Right lobe of liver (tissue), 6 donors: ENCODE measurements at regions of chr14 and their contacts with region 1.

Region 1: DNA sequence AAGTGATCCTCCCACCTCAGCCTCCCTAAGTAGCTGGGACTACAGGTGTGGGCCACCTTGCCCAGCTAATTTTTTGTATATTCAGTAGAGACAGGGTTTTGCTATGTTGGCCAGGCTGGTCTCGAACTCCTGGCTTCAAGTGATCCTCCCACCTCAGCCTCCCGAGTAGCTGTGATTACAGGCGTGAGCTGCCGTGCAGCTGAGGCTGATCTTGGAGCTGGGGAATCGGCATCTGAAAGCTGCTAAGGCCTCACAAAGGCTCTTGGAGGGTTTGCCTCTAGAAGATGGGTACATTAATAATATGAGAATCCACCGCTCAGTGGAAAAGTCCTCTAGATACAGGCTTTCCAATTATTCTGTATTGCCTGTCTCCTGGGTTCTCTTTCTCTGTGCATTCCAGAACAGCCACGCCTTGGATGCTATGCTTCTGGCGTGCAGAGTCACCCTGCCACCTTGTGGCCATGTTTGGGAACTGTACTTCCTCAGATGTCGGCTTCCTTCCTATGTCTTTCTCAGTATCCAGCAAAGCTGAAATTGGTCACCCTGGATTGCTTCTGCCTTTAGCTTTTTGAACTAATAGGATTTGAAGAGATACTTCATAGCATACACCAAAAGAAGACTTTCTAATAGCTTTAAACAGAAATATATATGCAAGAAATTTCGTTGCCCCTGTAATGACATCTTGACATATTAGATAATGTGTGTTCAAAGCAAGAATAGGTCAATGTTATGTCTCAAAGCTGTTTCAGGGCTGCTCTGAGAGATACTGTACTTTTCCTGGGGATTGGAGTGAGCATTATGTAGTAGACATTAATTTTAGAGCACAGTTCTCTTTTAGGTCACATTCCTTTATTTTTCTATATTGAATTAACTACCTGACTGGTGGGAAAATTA is 75.4 kb downstream of the SNAPC1 start:
- DNase-seq: peak; percentile 68 to 76 (median 70)
- ATAC-seq: peak; percentile 100
- H3K4me3 ChIP-seq: no peak overlapping the region
- H3K27ac ChIP-seq: no peak overlapping the region
- H3K4me1 ChIP-seq: no peaks in the 10 kb centered on the region
- H3K27me3 ChIP-seq: no peaks in the 10 kb centered on the region
- CTCF ChIP-seq: peak; percentile 92 to 97 (median 96)
- POLR2A ChIP-seq: no peak

Region 2: GRCh38 chr14:61456720-61457119 is 380.9 kb before region 1 on chr14:
- intact Hi-C with region 1: loop called (anchors 5 kb)
- DNase-seq: peak; percentile 68 to 81 (median 70)
- ATAC-seq: peak; percentile 84 to 88 (median 86)
- H3K4me3 ChIP-seq: no peak overlapping the region
- H3K27ac ChIP-seq: no peak overlapping the region
- H3K4me1 ChIP-seq: no peaks in the 10 kb centered on the region
- H3K27me3 ChIP-seq: no peaks in the 10 kb centered on the region
- CTCF ChIP-seq: peak; percentile 69 to 96 (median 91)
- POLR2A ChIP-seq: no peak

Region 3: GRCh38 chr14:61461808-61462275 is 375.7 kb before region 1 on chr14:
- intact Hi-C with region 1: loop called (anchors 5 kb)
- DNase-seq: peak in 1 of 3 donors; percentile 33
- ATAC-seq: peak; percentile 78 to 93 (median 84)
- H3K4me3 ChIP-seq: no peak overlapping the region
- H3K27ac ChIP-seq: no peak overlapping the region
- H3K4me1 ChIP-seq: peaks cover 0 to 4% (median 0%) of the 10 kb centered on the region in 4 donors
- H3K27me3 ChIP-seq: no peaks in the 10 kb centered on the region
- CTCF ChIP-seq: peak; percentile 72 to 90 (median 81)
- POLR2A ChIP-seq: no peak

Region 4: GRCh38 chr14:61950340-61950739 is 112.8 kb after region 1 on chr14:
- intact Hi-C with region 1: no loop called
- DNase-seq: no peak
- ATAC-seq: no peak
- H3K4me3 ChIP-seq: no peak overlapping the region
- H3K27ac ChIP-seq: no peak overlapping the region
- H3K4me1 ChIP-seq: no peaks in the 10 kb centered on the region
- H3K27me3 ChIP-seq: no peaks in the 10 kb centered on the region
- CTCF ChIP-seq: no peak
- POLR2A ChIP-seq: no peak